ENCODE measurements at regions of chr11 and their contacts with region 1.

Region 1: DNA sequence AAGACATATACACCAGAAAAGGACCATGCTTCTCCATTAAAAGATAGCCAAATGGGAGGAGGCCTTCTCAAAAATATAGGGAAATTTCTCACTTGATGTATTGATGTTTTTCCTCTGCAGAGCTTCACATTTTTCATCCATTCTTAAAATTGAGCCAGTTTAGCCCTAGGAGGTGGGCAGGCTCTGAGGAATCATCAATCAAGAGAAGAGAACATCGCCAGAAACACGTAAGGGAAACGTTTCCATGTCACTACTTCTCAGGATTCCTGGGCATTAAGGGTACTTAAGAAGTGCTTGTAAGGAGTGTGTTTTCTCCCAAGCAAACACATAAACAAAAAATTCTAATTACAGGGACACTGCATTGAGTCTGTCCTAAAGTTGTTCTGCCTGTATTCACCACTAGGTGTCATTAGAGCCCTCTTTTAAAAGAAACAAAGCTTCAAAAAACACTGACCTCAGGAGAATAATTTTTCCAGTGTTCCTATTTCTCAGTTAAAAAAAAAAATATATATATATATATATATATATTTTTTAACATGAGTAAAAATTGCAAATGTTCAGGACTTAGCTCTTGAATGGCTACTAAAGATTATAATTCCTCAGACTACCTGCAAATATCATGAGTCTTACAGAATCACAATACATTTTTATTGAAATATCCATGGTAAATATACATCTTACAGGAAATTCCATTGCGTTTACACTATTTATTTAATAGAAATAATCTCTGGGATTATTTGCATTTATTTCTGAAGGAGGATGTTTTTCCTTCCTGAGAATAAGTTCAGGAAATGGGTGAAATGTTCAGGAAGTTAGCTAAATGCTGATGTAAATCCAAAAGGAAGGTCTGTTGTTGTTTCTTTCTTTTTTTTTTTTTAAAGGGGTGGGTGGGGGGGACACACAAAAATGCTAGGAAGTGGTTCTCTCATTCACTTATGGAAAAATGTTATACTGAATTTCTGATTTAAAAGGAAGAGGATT is 16.0 kb downstream of the FZD4 start:
- DNase-seq: peak in 4 of 5 donors; percentile 26 to 34 (median 32)
- H3K4me3 ChIP-seq: no peak overlapping the region
- H3K4me3 Mint-ChIP-seq: no peak overlapping the region
- H3K27ac ChIP-seq: no peak overlapping the region
- H3K27ac Mint-ChIP-seq: no peak overlapping the region
- H3K4me1 ChIP-seq: no peaks in the 10 kb centered on the region
- H3K4me1 Mint-ChIP-seq: no peaks in the 10 kb centered on the region
- H3K27me3 ChIP-seq: no peaks in the 10 kb centered on the region
- H3K27me3 Mint-ChIP-seq: peaks cover 3 to 5% of the 10 kb centered on the region in 2 donors

Region 2: GRCh38 chr11:86706321-86706720 is 232.9 kb before region 1 on chr11:
- CTCF ChIA-PET with region 1: no interaction called
- POLR2A ChIA-PET with region 1: no interaction called
- intact Hi-C with region 1: no loop called
- DNase-seq: no peak
- H3K4me3 ChIP-seq: no peak overlapping the region
- H3K4me3 Mint-ChIP-seq: no peak overlapping the region
- H3K27ac ChIP-seq: no peak overlapping the region
- H3K27ac Mint-ChIP-seq: no peak overlapping the region
- H3K4me1 ChIP-seq: no peaks in the 10 kb centered on the region
- H3K4me1 Mint-ChIP-seq: no peaks in the 10 kb centered on the region
- H3K27me3 ChIP-seq: no peaks in the 10 kb centered on the region
- H3K27me3 Mint-ChIP-seq: peaks cover 4 to 12% of the 10 kb centered on the region in 2 donors

Region 3: DNA sequence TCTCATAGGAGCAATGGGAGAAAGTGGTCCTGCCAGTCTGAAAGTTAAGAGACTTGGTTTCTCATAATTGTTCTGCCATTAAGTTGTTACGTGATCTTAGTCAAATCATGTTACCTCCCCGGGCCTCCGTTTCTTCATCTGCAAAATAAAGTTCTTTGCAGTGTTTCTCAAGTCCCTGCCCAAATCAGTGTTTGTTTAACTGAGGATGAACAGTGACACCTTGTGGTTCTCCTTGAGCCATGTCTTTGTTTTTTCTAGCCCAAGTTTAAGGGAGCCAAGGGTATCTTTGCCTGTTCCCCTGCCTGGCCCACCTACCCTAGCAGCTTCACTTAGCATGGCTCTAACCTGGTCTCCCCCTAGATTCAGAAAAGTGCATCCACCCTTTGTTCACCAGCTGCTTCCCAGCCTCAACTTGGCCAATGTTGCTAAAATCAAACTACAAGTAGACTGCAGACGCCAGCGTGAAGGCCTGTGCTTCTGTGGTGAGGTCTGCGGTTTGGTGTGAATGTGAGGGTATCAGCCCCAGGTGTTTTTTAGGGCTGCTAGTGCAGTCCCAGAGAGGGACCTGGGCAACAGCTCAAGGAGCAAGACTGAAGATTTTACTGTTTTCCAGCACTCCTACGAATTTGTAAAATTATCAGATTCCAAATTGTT is 19.5 kb before region 1 on chr11:
- CTCF ChIA-PET with region 1: interaction called, 21 read pairs
- POLR2A ChIA-PET with region 1: no interaction called
- intact Hi-C with region 1: no loop called
- DNase-seq: peak in 2 of 5 donors; percentile 6 to 11
- H3K4me3 ChIP-seq: no peak overlapping the region
- H3K4me3 Mint-ChIP-seq: no peak overlapping the region
- H3K27ac ChIP-seq: no peak overlapping the region
- H3K27ac Mint-ChIP-seq: no peak overlapping the region
- H3K4me1 ChIP-seq: peaks cover 6% of the 10 kb centered on the region
- H3K4me1 Mint-ChIP-seq: peaks cover 0 to 8% (median 1%) of the 10 kb centered on the region in 4 donors
- H3K27me3 ChIP-seq: no peaks in the 10 kb centered on the region
- H3K27me3 Mint-ChIP-seq: no peaks in the 10 kb centered on the region

Region 4: DNA sequence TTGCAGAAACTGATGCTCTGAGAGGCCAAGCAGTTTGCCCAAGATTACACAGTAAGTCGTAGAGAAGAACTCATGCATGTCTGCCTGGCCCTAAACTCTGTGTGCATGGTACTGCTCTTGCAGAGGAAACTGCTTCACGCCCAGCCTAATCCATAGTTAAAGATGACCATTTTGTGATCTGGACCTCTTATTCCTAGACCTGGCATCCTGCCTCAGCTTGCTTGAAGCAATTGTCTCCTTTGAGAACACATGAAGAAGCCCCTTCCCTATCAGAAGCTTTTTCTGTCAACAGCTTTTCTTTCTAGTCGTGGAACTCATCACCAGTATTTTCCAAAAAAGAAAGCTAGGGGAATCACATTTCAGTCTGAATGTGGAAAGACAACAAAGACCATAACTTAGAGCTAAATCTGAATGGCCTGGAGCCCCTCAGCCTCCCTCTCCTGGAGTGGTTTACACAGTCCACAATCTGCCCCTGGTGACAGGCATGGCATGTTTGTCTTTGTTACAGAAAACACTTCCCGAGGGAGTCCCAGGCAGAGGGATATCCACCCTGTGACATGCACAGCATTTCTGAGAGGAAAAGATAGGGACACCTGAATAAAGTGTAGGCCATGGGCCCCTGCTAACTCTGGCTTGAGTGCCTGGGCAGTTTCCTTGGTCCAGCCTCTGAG is 18.9 kb after region 1 on chr11:
- CTCF ChIA-PET with region 1: interaction called, 17 read pairs
- POLR2A ChIA-PET with region 1: no interaction called
- intact Hi-C with region 1: no loop called
- DNase-seq: no peak
- H3K4me3 ChIP-seq: no peak overlapping the region
- H3K4me3 Mint-ChIP-seq: peak overlapping the region in 1 of 8 donors; percentile 50
- H3K27ac ChIP-seq: no peak overlapping the region
- H3K27ac Mint-ChIP-seq: no peak overlapping the region
- H3K4me1 ChIP-seq: peaks cover 7% of the 10 kb centered on the region
- H3K4me1 Mint-ChIP-seq: peaks cover 8 to 22% (median 12%) of the 10 kb centered on the region in 4 donors
- H3K27me3 ChIP-seq: peaks cover 5% of the 10 kb centered on the region
- H3K27me3 Mint-ChIP-seq: peaks cover 19 to 25% of the 10 kb centered on the region in 2 donors

Region 5: DNA sequence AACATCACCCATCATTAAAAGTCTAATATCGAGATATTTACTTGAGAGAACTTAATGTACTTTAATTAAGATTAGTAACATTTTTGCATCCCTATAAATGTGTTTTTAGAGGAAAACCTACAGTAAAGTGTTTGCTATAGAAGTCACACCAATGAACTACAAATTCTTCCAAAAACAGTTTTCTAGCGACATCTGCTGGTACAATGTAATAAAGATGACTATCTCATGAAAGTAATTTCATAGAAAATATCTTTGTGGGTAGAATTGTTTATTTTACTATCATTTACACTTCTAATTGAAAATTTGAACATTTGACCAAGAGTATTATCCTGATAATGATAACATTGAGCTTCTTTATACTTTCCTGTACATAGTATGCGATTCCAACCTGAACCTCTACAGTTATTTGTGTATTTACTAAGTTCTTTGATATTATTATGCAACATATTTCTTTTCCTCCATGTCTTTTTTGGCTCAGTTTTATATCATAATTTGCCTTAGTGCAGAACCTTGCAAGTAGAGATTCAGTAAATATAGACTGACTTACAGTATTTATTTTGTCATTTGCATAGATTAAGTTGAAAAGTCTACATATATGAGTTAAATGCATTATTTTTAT is 351.2 kb after region 1 on chr11:
- CTCF ChIA-PET with region 1: interaction called, 86 read pairs
- POLR2A ChIA-PET with region 1: no interaction called
- intact Hi-C with region 1: loop called (anchors 1 kb)
- DNase-seq: peak in 4 of 5 donors; percentile 33 to 54 (median 44)
- H3K4me3 ChIP-seq: no peak overlapping the region
- H3K4me3 Mint-ChIP-seq: no peak overlapping the region
- H3K27ac ChIP-seq: no peak overlapping the region
- H3K27ac Mint-ChIP-seq: no peak overlapping the region
- H3K4me1 ChIP-seq: no peaks in the 10 kb centered on the region
- H3K4me1 Mint-ChIP-seq: no peaks in the 10 kb centered on the region
- H3K27me3 ChIP-seq: no peaks in the 10 kb centered on the region
- H3K27me3 Mint-ChIP-seq: no peaks in the 10 kb centered on the region

Region 6: DNA sequence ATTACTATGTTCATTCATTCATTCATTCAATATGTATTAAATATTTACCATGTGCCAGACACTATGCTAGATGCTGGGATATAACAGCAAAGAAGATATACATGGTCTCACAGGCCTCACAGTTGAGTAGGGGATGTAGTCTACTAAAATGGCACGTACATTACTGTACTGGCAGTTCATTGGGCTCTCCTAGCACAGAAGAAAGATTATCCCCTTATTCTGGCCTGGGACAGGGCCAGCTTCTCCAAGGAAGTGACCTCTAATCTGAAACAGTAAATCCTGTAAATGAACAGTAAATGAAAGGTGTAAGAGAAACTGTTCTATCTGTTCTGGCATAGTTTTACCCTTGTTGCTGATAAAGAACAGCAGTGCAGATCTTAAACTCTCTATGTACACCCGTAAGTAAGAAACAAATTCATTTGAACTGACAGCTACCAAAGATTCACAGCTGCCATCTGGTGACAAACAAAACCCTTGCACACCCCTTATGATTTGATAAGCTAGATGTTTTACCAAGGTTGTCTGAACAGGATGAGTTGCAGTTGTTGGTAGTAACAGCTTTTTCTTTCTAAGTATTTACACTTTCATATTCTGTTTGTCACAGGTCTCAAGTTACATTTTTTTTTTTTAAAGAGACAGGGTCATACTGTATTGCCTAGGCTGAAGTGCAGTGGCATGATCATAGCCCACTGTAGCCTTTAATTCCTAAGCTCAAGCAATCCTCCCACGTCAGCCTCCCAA is 361.6 kb after region 1 on chr11:
- CTCF ChIA-PET with region 1: interaction called, 13 read pairs
- POLR2A ChIA-PET with region 1: no interaction called
- intact Hi-C with region 1: no loop called
- DNase-seq: no peak
- H3K4me3 ChIP-seq: no peak overlapping the region
- H3K4me3 Mint-ChIP-seq: no peak overlapping the region
- H3K27ac ChIP-seq: no peak overlapping the region
- H3K27ac Mint-ChIP-seq: no peak overlapping the region
- H3K4me1 ChIP-seq: no peaks in the 10 kb centered on the region
- H3K4me1 Mint-ChIP-seq: peaks cover 0 to 6% (median under 1%) of the 10 kb centered on the region in 4 donors
- H3K27me3 ChIP-seq: no peaks in the 10 kb centered on the region
- H3K27me3 Mint-ChIP-seq: no peaks in the 10 kb centered on the region

Region 7: DNA sequence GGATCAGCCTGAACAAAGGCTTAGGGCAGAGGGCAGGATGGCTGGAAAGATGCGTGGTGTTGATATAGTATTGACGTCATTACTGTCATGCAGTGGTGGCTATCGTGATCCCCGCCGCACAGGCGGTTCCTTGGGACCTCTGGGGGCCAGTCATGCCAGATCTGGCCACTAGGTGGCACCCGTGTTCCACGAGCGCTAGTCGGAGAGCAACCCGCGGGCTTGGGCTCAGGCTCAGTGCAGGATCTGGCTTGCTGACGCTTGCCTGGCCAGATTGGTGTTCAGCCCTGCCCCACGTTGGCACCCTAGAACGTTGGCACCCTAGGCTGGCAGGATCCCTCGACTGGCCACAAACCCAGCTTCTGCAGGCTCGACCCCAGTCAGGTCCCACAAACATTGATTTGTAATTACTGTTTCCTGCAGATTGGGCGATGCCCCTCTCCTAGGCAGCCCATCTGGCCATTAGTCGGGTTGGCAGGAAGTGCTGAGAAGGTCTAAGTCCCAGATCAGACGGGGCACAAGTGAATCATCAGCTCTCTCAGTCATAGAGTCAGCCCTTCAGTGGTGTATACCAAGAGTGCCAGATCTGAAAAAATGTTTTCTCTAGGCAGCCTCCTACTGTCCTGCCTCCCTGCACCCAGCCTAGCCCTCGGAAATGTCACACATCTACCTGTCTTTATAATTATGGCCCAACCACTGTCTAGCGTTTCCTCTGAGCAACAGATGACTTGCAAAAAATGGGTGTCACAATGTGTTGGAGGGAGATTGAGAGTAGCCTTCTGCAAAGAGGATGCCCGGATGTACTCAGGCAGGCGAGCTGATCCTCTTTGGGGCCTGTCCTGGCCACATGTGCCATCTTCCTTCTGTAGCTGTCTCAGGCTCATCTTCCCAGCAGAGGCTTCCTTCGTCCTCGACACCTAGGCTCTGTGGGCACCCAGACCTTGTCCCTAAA is 413.8 kb after region 1 on chr11:
- CTCF ChIA-PET with region 1: no interaction called
- POLR2A ChIA-PET with region 1: no interaction called
- intact Hi-C with region 1: loop called (anchors 1 kb)
- DNase-seq: peak; percentile 51 to 71 (median 67)
- H3K4me3 ChIP-seq: no peak overlapping the region
- H3K4me3 Mint-ChIP-seq: peak overlapping the region in 2 of 8 donors; percentile 23 to 24
- H3K27ac ChIP-seq: no peak overlapping the region
- H3K27ac Mint-ChIP-seq: peak overlapping the region in 1 of 7 donors; percentile 19
- H3K4me1 ChIP-seq: peaks cover 9% of the 10 kb centered on the region
- H3K4me1 Mint-ChIP-seq: peaks cover 7 to 14% (median 11%) of the 10 kb centered on the region in 4 donors
- H3K27me3 ChIP-seq: no peaks in the 10 kb centered on the region
- H3K27me3 Mint-ChIP-seq: peaks cover 4 to 6% of the 10 kb centered on the region in 2 donors